ENCODE measurements at regions of chr2 and their contacts with region 1.

Region 1: DNA sequence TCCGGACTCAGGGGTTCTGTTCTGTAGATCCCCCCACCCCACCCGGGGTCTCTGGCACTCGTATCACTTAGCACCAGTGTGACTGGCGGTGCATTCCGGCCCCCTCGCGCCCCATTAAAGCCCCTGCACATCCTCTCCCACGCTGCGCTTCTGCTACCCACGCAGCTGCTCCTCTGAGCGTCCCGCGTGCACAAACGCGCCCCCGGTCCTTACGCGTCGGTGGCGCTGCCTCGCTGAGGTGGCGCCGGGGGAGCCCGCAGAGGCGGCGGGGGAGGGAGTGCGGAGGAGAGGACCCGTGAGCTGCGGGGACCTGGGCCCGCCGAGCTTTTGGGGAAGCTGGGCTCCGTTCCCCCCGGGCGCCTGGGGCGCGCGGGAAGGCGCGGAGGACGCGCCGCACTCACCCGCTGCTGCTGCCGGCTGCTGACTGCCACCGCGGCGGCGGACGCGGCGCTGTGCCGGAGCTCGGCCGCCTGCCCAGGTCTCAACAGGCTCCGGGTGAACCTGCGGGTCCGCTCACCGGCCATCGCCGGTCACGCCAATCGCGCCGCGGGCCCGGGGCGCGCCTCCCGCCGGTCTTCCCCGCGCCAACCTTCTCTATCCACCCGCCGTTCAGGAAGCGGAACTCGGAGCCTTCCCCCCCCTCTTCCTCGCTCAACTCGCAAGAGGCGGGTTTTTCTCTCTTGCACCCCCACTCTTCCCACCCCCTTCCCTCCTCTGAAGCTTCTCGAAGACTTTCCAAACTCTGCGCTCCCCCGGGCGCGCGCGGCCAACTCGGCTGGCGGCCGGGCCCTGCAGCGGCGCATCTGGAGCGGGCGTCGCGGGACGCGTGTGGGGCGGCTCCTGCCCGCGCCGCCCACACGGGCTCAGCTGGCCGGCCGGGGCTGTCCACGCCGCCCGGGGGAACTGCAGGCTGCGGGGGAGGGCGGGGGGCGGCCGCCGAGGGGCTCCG is at the start of gene DOCK10:
- DNase-seq: peak; percentile 83
- ATAC-seq: peak; percentile 44
- H3K4me3 ChIP-seq: peak within 1 kb of the TSS; percentile 58 to 95 (median 81)
- H3K4me3 Mint-ChIP-seq: peak within 1 kb of the TSS; percentile 95
- H3K27ac ChIP-seq: peak within 1 kb of the TSS; percentile 87 to 91
- H3K27ac Mint-ChIP-seq: peak within 1 kb of the TSS; percentile 97
- H3K4me1 ChIP-seq: peaks cover 26 to 29% of the 10 kb centered on the region in 2 donors
- H3K4me1 Mint-ChIP-seq: peaks cover 48% of the 10 kb centered on the region
- H3K27me3 ChIP-seq: peaks cover 0 to 5% (median 1%) of the 10 kb centered on the region in 4 experiments
- H3K27me3 Mint-ChIP-seq: peaks cover 8% of the 10 kb centered on the region
- CTCF ChIP-seq: no peak
- total RNA-seq, gene DOCK10: 139 and 140 TPM in 2 replicates

Region 2: GRCh38 chr2:223580951-223581350 is 1461.2 kb before region 1 on chr2:
- CTCF ChIA-PET with region 1: no interaction called
- POLR2A ChIA-PET with region 1: no interaction called
- intact Hi-C with region 1: no loop called
- DNase-seq: no peak
- ATAC-seq: no peak
- H3K4me3 ChIP-seq: no peak overlapping the region
- H3K4me3 Mint-ChIP-seq: no peak overlapping the region
- H3K27ac ChIP-seq: no peak overlapping the region
- H3K27ac Mint-ChIP-seq: no peak overlapping the region
- H3K4me1 ChIP-seq: no peaks in the 10 kb centered on the region
- H3K4me1 Mint-ChIP-seq: no peaks in the 10 kb centered on the region
- H3K27me3 ChIP-seq: no peaks in the 10 kb centered on the region
- H3K27me3 Mint-ChIP-seq: peaks cover 10% of the 10 kb centered on the region
- CTCF ChIP-seq: no peak

Region 3: DNA sequence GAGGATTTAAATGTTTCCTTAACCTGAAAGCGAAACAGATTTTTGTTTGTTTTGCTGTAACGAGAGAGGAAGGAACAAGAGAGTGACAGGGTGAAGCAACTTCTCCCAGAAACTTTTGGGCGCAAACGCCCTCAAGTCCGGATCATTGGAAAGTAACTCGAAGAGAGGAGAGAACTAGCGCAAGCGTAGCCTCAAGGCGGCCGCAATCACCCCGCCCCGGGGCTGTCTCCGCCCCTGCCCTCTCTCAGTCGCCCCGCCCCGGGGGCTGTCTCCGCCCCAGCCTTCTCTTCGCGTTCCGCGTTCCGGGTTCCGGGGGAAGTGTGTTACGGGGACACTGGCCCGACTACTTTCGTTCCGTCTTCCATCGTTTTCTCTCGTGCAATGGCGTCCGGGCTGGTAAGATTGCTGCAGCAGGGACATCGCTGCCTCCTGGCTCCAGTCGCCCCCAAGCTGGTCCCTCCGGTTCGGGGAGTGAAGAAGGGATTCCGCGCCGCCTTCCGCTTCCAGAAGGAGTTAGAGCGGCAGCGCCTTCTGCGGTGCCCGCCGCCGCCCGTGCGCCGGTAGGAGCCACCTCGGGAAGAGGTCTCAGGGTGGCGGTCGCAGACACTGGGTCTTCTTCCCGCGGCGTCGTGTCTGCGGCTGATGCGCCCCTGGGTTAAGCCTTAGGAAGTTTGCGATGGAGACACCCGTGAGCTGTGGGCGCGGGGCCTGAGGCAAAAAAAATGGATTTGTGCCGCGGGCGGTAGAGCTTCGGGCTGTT is 1084.9 kb before region 1 on chr2 and contains the start of gene MRPL44:
- CTCF ChIA-PET with region 1: no interaction called
- POLR2A ChIA-PET with region 1: no interaction called
- intact Hi-C with region 1: loop called (anchors 2 kb)
- DNase-seq: peak; percentile 96
- ATAC-seq: peak; percentile 99
- H3K4me3 ChIP-seq: peak within 1 kb of the TSS; percentile 66 to 94 (median 86)
- H3K4me3 Mint-ChIP-seq: peak within 1 kb of the TSS; percentile 94
- H3K27ac ChIP-seq: peak within 1 kb of the TSS; percentile 72 to 78
- H3K27ac Mint-ChIP-seq: peak within 1 kb of the TSS; percentile 97
- H3K4me1 ChIP-seq: peaks cover 48 to 52% of the 10 kb centered on the region in 2 donors
- H3K4me1 Mint-ChIP-seq: peaks cover 67% of the 10 kb centered on the region
- H3K27me3 ChIP-seq: no peaks in the 10 kb centered on the region
- H3K27me3 Mint-ChIP-seq: no peaks in the 10 kb centered on the region
- CTCF ChIP-seq: no peak
- total RNA-seq, gene MRPL44: 23.4 and 26.7 TPM in 2 replicates

Region 4: DNA sequence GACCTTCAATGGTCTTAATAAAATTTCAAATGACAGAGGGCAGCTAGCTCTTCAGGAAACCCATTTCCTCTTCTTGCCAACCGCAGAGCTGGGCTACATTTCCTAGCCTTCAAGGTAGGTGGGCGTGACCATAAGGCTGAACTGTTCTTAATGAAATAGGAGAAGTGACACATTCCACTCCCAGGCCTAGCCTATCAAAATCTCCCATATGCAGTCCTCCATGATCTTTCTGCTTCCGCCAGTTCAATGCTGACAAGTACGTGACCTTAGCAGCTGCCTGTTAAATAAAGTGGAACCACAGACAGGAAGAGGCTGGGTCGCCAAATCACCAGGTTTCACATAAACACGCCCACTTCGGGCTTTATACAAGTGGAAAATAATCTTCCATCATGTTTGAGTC is 1016.3 kb before region 1 on chr2:
- CTCF ChIA-PET with region 1: no interaction called
- POLR2A ChIA-PET with region 1: no interaction called
- intact Hi-C with region 1: loop called (anchors 5 kb)
- DNase-seq: peak; percentile 90
- ATAC-seq: peak; percentile 97
- H3K4me3 ChIP-seq: peak overlapping the region in 2 of 5 experiments; percentile 2 to 40
- H3K4me3 Mint-ChIP-seq: peak overlapping the region; percentile 57
- H3K27ac ChIP-seq: peak overlapping the region; percentile 43 to 44
- H3K27ac Mint-ChIP-seq: peak overlapping the region; percentile 74
- H3K4me1 ChIP-seq: peaks cover 36% of the 10 kb centered on the region in 2 donors
- H3K4me1 Mint-ChIP-seq: peaks cover 40% of the 10 kb centered on the region
- H3K27me3 ChIP-seq: no peaks in the 10 kb centered on the region
- H3K27me3 Mint-ChIP-seq: no peaks in the 10 kb centered on the region
- CTCF ChIP-seq: no peak

Region 5: DNA sequence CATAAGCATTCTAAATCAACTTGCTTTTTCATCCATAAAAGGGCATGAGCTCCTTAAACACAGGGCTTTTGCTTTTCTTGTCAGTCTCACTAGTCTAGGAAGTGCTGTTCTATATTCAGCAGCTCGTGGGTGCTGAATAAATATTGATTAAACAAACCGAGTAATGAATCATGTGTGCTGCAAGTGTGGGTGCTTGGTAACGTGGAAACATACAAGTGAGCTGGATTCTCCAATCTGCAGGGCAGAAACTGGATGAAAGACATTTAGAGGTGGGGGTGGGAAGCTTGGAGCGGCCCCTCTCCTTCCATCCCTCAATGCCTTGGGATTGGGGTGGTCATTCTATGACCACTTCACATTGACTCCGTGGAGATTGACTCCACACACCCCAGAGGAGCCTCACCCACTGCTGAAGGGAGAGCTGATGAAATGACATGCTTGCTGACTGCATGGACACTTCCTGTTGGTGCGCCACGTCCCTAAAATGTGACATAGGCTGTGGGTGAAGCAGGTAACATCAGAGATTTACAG is 114.4 kb before region 1 on chr2:
- CTCF ChIA-PET with region 1: no interaction called
- POLR2A ChIA-PET with region 1: no interaction called
- intact Hi-C with region 1: loop called (anchors 5 kb)
- DNase-seq: no peak
- ATAC-seq: no peak
- H3K4me3 ChIP-seq: no peak overlapping the region
- H3K4me3 Mint-ChIP-seq: peak overlapping the region; percentile 4
- H3K27ac ChIP-seq: peak overlapping the region; percentile 38 to 43
- H3K27ac Mint-ChIP-seq: peak overlapping the region; percentile 78
- H3K4me1 ChIP-seq: peaks cover 86 to 87% of the 10 kb centered on the region in 2 donors
- H3K4me1 Mint-ChIP-seq: peaks cover 94% of the 10 kb centered on the region
- H3K27me3 ChIP-seq: no peaks in the 10 kb centered on the region
- H3K27me3 Mint-ChIP-seq: no peaks in the 10 kb centered on the region
- CTCF ChIP-seq: no peak

Region 6: GRCh38 chr2:225025917-225026571 is 16.1 kb before region 1 on chr2:
- CTCF ChIA-PET with region 1: no interaction called
- POLR2A ChIA-PET with region 1: interaction called, 3 read pairs
- intact Hi-C with region 1: loop called (anchors 2 kb)
- DNase-seq: peak; percentile 25
- ATAC-seq: peak; percentile 54
- H3K4me3 ChIP-seq: no peak overlapping the region
- H3K4me3 Mint-ChIP-seq: no peak overlapping the region
- H3K27ac ChIP-seq: peak overlapping the region in 1 of 2 donors; percentile 32
- H3K27ac Mint-ChIP-seq: peak overlapping the region; percentile 1
- H3K4me1 ChIP-seq: peaks cover 15 to 17% of the 10 kb centered on the region in 2 donors
- H3K4me1 Mint-ChIP-seq: peaks cover 31% of the 10 kb centered on the region
- H3K27me3 ChIP-seq: no peaks in the 10 kb centered on the region
- H3K27me3 Mint-ChIP-seq: no peaks in the 10 kb centered on the region
- CTCF ChIP-seq: no peak

Region 7: GRCh38 chr2:225270861-225271260 is 228.7 kb after region 1 on chr2:
- CTCF ChIA-PET with region 1: no interaction called
- POLR2A ChIA-PET with region 1: no interaction called
- intact Hi-C with region 1: loop called (anchors 10 kb)
- DNase-seq: peak; percentile 82
- ATAC-seq: peak; percentile 94
- H3K4me3 ChIP-seq: no peak overlapping the region
- H3K4me3 Mint-ChIP-seq: no peak overlapping the region
- H3K27ac ChIP-seq: no peak overlapping the region
- H3K27ac Mint-ChIP-seq: peak overlapping the region; percentile 29
- H3K4me1 ChIP-seq: peaks cover 16 to 22% of the 10 kb centered on the region in 2 donors
- H3K4me1 Mint-ChIP-seq: peaks cover 29% of the 10 kb centered on the region
- H3K27me3 ChIP-seq: no peaks in the 10 kb centered on the region
- H3K27me3 Mint-ChIP-seq: no peaks in the 10 kb centered on the region
- CTCF ChIP-seq: no peak